ENCODE measurements at regions of chr7 and their contacts with region 1.

Region 1: GRCh38 chr7:141014524-141015395 is at the start of gene MRPS33:
- DNase-seq: peak; percentile 96
- H3K4me3 ChIP-seq: peak within 1 kb of the TSS; percentile 47 to 97 (median 67)
- H3K27ac ChIP-seq: peak within 1 kb of the TSS; percentile 92
- H3K4me1 ChIP-seq: peaks cover 6% of the 10 kb centered on the region
- H3K27me3 ChIP-seq: peaks cover 2% of the 10 kb centered on the region in 2 experiments
- CTCF ChIP-seq: peak; percentile 67 to 72
- POLR2A ChIP-seq: peak; percentile 81
- total RNA-seq, gene MRPS33: 34.1 and 37.4 TPM in 2 replicates

Region 2: DNA sequence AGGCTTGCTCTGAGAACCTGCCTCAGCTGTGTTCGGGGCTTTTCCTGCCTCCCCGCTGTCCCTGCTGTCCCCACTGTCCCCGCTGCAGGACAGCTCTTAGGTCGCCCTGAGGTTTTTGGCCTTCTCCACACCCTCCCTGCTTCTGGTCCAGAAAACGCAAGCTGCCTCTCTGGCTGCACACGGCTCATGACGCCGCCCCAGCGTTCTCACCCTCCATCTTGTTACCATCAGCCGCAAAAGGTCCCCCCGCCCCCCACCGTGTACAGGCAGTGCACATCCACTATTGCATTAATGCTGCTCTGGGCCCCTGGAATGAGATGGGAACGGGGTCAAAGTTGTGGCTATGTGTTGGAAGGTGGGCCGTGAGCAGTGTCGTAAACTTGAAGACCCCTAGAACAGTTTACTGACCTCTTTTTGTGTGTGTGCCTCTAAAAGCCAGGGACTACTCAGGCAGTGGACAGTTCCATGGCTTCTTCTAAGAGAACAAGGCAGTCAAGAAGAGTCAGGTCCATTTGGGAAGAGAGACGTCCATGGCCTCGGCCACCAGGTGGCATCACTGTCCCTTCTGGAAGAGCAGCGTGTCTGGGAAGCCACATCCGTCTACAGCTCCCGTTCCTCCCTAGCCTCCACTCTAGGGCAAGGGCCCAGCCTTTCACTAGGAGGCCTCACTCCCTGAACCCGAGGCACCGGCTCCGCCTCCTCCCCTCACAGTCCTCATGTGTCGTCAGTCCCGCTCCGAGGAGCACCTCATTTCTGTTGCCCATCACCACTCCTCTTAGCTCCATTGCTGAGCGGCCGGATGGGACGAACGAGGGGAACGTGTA is 497.0 kb before region 1 on chr7:
- CTCF ChIA-PET with region 1: interaction called, 31 read pairs
- POLR2A ChIA-PET with region 1: no interaction called
- dilution Hi-C with region 1: no loop called
- intact Hi-C with region 1: loop called (anchors 1 kb)
- DNase-seq: peak; percentile 79
- H3K4me3 ChIP-seq: no peak overlapping the region
- H3K27ac ChIP-seq: no peak overlapping the region
- H3K4me1 ChIP-seq: no peaks in the 10 kb centered on the region
- H3K27me3 ChIP-seq: no peaks in the 10 kb centered on the region
- CTCF ChIP-seq: peak; percentile 77 to 92
- POLR2A ChIP-seq: no peak

Region 3: DNA sequence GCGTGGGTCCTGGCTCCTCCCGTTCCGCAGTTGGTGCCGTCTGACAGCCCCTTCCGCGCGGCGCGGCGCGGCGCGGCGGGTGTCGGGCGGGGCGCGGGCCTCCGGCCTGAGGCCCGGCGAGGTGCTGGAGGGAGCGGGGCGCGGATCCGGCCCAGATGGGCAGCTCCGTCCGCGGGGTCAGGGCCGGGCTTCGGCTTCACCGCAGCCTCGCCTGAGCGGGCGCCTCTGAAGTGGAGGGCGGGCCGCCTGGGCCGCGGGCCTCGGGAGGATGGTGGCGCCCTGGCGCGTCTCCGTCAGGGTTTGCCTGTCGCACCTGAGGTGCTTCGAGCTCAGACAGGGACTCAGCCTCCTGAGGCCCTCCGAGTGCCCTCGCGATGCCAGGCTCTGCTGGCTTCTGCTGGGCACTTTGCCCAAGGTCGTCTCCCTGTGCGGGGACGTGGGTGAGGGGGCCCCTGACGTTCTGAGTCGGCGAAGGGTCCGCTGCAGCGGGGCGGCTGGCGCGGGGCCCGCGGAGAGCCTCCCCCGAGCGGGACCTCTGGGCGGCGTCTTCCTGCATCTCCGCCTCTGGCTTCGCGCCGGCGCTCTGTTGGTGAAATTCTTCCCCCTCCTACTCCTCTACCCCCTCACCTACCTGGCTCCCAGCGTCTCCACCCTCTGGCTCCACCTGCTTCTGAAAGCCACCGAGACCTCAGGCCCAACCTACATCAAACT is 341.5 kb before region 1 on chr7:
- CTCF ChIA-PET with region 1: interaction called, 17 read pairs
- POLR2A ChIA-PET with region 1: no interaction called
- dilution Hi-C with region 1: no loop called
- intact Hi-C with region 1: loop called (anchors 1 kb)
- DNase-seq: peak; percentile 28
- H3K4me3 ChIP-seq: peak overlapping the region; percentile 22 to 76 (median 45)
- H3K27ac ChIP-seq: no peak overlapping the region
- H3K4me1 ChIP-seq: peaks cover 8% of the 10 kb centered on the region
- H3K27me3 ChIP-seq: peaks cover 0 to 3% of the 10 kb centered on the region in 2 experiments
- CTCF ChIP-seq: no peak
- POLR2A ChIP-seq: no peak

Region 4: DNA sequence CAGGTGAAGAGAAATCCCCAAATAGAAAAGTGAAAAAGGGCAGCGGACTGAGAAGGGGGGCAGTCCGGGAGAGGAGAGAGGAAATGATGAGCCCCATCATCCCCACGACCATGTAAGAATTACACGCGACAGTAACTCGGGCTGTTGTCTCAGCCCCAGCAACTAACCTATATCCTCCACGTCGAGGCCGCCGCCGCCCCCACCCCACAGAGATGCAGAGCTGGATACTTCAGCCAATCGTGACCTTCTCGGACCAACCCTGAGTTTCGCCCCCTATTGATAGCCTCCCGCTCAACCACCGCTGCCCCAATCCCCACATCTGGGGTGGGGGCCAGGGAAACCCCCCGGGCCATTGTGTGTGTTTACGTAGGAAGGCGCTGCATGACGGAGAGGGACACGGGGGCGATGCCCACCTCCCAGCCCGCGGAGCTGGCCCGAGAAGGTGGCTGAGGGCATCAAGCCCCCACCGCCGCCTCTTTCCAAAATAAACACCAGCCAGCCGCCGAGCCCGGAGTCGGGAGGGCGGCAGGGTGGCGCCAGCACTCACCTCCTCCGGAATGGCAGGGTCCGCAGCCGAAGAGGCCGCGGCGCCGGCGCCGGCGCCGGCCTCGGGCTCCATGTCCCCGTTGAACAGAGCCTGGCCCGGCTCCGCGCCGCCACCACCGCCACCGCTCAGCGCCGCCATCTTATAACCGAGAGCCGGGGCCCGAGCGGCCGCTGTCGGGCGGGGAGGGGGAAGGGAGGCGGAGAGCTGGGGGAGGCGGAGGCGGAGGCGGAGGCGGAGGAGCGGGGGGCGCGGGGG is 90.5 kb before region 1 on chr7:
- CTCF ChIA-PET with region 1: interaction called, 4 read pairs
- POLR2A ChIA-PET with region 1: no interaction called
- dilution Hi-C with region 1: no loop called
- intact Hi-C with region 1: loop called (anchors 1 kb)
- DNase-seq: peak; percentile 85
- H3K4me3 ChIP-seq: peak overlapping the region; percentile 64 to 89 (median 88)
- H3K27ac ChIP-seq: peak overlapping the region; percentile 93
- H3K4me1 ChIP-seq: peaks cover 12% of the 10 kb centered on the region
- H3K27me3 ChIP-seq: peaks cover 3 to 4% of the 10 kb centered on the region in 2 experiments
- CTCF ChIP-seq: peak; percentile 37 to 56
- POLR2A ChIP-seq: peak; percentile 62

Region 5: GRCh38 chr7:140972876-140973859 is 41.6 kb before region 1 on chr7:
- CTCF ChIA-PET with region 1: no interaction called
- POLR2A ChIA-PET with region 1: no interaction called
- dilution Hi-C with region 1: no loop called
- intact Hi-C with region 1: no loop called
- DNase-seq: no peak
- H3K4me3 ChIP-seq: no peak overlapping the region
- H3K27ac ChIP-seq: no peak overlapping the region
- H3K4me1 ChIP-seq: no peaks in the 10 kb centered on the region
- H3K27me3 ChIP-seq: no peaks in the 10 kb centered on the region
- CTCF ChIP-seq: no peak
- POLR2A ChIP-seq: no peak

Region 6: GRCh38 chr7:141551094-141551781 is 536.5 kb after region 1 on chr7 and contains the start of gene AGK:
- CTCF ChIA-PET with region 1: interaction called, 7 read pairs
- POLR2A ChIA-PET with region 1: no interaction called
- dilution Hi-C with region 1: no loop called
- intact Hi-C with region 1: loop called (anchors 1 kb)
- DNase-seq: peak; percentile 75
- H3K4me3 ChIP-seq: peak within 1 kb of the TSS; percentile 60 to 97 (median 82)
- H3K27ac ChIP-seq: peak within 1 kb of the TSS; percentile 38
- H3K4me1 ChIP-seq: peaks cover 13% of the 10 kb centered on the region
- H3K27me3 ChIP-seq: no peaks in the 10 kb centered on the region
- CTCF ChIP-seq: no peak
- POLR2A ChIP-seq: peak; percentile 79
- total RNA-seq, gene AGK: 33.9 and 34.3 TPM in 2 replicates

Measured in endothelial cell of umbilical vein (primary cell).